Adrenal gland (tissue), 19 donors: ENCODE measurements at regions of chr7 and their contacts with region 1.

Region 1: DNA sequence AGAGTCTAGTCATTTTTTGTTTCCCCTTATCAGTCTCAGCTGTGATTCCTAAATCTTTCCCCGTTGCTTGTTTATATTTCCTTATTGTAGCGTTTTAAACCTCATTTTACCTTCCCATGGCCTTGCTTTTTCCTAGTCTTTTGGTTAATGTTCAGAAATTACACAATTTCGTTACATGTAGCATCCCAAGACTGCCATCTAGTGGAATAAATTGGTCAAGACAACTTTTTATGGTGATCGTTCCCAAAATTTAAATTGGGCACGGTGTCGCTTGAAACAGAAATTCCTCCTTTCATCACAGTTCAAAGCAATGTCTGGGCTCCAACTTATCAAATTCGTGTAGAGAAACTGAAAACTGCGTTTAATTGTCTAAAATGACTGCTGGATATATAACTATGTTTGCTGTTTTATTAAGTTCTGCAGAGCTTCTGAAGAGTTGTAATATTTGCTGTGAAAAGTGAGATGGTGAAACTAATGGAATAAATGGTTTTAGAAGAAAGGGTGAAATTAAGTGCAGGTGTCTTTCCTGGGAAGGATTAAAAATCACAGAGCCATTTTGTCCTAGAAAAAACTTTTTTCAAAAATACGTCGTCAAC is 370.2 kb downstream of the PHF14 start:
- DNase-seq: peak in 1 of 7 donors; percentile 1
- H3K4me3 ChIP-seq: no peak overlapping the region
- H3K27ac ChIP-seq: no peak overlapping the region
- H3K4me1 ChIP-seq: peaks cover 0 to 8% of the 10 kb centered on the region in 2 donors
- H3K27me3 ChIP-seq: no peaks in the 10 kb centered on the region
- CTCF ChIP-seq: peak; percentile 64 to 83 (median 74)
- POLR2A ChIP-seq: no peak

Region 2: DNA sequence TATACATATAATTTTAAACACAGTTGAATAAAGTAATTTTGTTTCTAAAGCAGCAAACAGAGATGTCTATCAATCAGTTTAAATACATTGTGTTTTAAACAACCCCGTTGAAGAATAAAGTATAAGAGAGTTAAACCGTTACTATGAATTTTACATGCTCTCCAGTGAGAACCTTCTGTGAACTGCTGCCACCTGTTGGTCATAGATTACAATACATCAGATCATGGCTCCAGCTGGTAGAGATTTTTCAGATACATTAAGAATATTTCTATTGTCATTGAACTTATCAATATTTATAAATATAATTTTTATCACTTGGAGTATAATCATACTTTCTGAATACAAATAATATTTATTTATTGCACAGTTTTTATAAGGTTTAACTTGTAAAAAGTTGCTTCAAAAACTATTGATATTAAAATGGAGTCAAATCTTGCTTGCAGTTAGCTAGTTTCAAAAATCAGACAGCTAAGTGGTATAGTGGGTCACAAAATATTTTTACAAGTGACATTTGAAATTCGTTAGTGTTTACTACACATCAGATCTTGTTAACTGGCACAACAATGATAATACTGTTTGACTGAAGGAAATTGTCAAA is 931.4 kb before region 1 on chr7:
- intact Hi-C with region 1: loop called in 1 of 2 experiments (anchors 10 kb)
- DNase-seq: peak; percentile 16 to 58 (median 35)
- H3K4me3 ChIP-seq: no peak overlapping the region
- H3K27ac ChIP-seq: no peak overlapping the region
- H3K4me1 ChIP-seq: no peaks in the 10 kb centered on the region
- H3K27me3 ChIP-seq: no peaks in the 10 kb centered on the region
- CTCF ChIP-seq: peak; percentile 44 to 77 (median 54)
- POLR2A ChIP-seq: no peak